ENCODE measurements at regions of chr4 and their contacts with region 1.

Region 1: GRCh38 chr4:37826295-37827029 is at the start of gene PGM2:
- DNase-seq: peak; percentile 45
- ATAC-seq: peak; percentile 98
- H3K4me3 ChIP-seq: peak within 1 kb of the TSS; percentile 79
- H3K27ac ChIP-seq: peak within 1 kb of the TSS; percentile 66
- H3K4me1 ChIP-seq: 0 out of 2 replicates have a peak, but pooled peaks cover 5% of the 10 kb centered on the region
- H3K27me3 ChIP-seq: no peaks in the 10 kb centered on the region
- CTCF ChIP-seq: 0 out of 6 replicates have a peak, but pooled peaks of 1 of the 3 experiments have one; percentile 7
- EP300 ChIP-seq: no peak
- POLR2A ChIP-seq: peak; percentile 100
- RAD21 ChIP-seq: 0 out of 2 replicates have a peak, but pooled peaks have one; percentile 5
- polyA plus RNA-seq, gene PGM2: 11.9 to 15.1 TPM

Region 2: DNA sequence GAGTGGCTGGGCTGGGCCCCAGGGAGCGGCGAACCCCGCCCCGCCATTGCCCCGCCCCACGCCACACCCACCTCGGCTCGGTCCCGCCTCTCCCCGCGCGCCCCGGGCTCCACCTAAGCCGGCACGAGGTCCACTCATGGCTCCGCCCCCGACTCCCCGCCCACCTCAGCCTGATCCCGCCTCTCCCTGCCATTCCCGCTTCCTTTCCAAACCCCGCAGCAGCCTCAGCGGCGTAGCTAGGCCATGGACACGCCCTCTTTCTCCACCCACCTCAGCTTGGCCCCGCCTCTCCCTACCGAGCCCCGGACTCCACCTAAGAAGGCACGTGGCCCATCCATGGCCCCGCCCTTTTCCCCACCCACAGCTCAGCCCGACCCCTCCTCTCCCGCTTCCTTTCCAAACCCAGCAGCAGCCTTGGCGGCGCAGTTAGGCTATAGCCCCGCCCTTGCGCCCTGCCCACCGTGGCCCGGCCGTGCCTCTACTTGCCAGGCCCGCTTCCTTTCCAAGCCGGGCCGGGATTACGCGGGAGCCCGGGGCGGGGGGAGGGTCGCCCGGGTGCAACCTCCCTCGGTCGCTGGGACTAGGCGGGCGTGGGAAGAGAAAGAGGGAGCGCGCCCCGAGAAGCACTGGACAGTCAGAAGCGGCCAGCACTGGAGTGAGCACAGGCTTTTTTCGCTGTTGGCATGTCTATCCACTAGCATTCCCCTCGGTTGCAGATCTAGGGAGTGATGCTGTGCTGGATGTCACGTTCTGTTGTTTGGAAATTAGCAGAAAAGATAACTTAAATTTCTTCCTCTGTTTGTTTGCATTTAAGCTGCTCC is 139.9 kb before region 1 on chr4 and contains the start of gene RELL1:
- CTCF ChIA-PET with region 1: interaction called, 4 read pairs
- POLR2A ChIA-PET with region 1: no interaction called
- RAD21 ChIA-PET with region 1: no interaction called
- SMC1A ChIA-PET with region 1: no interaction called
- in situ Hi-C with region 1: no loop called
- intact Hi-C with region 1: loop called (anchors 2 kb)
- DNase-seq: peak; percentile 97
- ATAC-seq: peak; percentile 89
- H3K4me3 ChIP-seq: peak within 1 kb of the TSS; percentile 87
- H3K27ac ChIP-seq: peak within 1 kb of the TSS; percentile 67
- H3K4me1 ChIP-seq: peaks cover 11% of the 10 kb centered on the region
- H3K27me3 ChIP-seq: no peaks in the 10 kb centered on the region
- CTCF ChIP-seq: no peak
- EP300 ChIP-seq: no peak
- POLR2A ChIP-seq: no peak
- RAD21 ChIP-seq: no peak
- polyA plus RNA-seq, gene RELL1: 0.20 to 0.26 TPM

Region 3: DNA sequence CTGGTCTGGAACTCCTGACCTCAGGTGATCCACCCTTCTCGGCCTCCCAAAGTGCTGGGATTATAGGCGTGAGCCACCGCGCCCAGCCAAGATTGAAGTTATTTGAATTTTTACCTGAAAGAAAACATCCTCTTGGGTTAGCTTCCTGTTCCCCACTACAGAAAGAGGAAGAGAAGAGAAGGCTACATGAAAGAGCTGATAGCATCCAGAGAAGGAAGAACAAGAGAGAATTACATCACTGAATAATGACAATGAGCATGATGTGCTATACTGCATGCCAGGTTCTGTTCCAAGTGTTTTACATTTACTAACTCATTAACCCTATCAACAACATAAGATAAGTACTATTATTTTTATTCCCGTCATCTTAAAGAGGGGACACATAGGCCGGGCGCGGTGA is 52.9 kb after region 1 on chr4:
- CTCF ChIA-PET with region 1: no interaction called
- POLR2A ChIA-PET with region 1: no interaction called
- RAD21 ChIA-PET with region 1: no interaction called
- SMC1A ChIA-PET with region 1: no interaction called
- in situ Hi-C with region 1: no loop called
- intact Hi-C with region 1: no loop called
- DNase-seq: no peak
- ATAC-seq: no peak
- H3K4me3 ChIP-seq: no peak overlapping the region
- H3K27ac ChIP-seq: no peak overlapping the region
- H3K4me1 ChIP-seq: no peaks in the 10 kb centered on the region
- H3K27me3 ChIP-seq: no peaks in the 10 kb centered on the region
- CTCF ChIP-seq: no peak
- EP300 ChIP-seq: no peak
- POLR2A ChIP-seq: no peak
- RAD21 ChIP-seq: no peak

Region 4: DNA sequence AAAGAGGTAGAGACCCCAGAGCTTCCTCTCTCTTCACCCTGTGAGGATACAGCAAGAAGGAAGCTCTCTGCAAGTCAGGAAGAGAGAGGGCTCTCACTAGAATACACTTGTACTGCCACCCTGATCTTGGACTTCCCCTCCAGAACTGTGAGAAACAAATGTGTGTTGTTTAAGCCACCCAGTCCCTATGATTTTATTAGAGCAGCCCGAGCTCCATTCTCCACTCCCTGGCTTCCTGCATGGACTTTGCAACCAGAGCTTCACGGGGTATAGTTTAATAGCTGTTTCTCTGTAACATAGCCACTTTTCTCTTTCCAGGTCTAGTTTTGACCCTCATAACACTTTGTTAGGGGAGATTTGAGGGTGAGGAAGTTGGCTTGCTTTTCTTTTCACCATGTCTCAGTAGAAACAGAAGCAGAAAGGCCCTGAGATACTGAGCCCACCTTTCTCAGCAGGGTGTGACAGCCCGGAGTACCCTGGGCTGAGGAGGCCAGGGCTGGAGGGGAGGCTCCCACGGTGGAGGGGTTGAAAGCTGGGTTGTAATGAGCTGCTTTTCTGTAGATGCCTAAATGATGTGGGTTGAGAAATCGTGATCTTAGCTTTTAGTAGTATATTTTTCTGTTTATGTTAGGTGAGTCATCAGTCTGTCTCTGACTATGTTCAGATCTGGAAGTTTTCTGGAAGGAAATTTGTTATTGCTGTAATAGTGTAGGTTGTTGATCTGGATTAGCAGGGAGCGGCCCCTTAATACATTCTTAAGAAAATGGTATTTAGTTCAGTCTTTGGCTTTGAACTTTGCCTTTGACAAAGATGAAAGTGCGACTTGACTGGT is 252.3 kb after region 1 on chr4:
- CTCF ChIA-PET with region 1: no interaction called
- POLR2A ChIA-PET with region 1: no interaction called
- RAD21 ChIA-PET with region 1: no interaction called
- SMC1A ChIA-PET with region 1: no interaction called
- in situ Hi-C with region 1: no loop called
- intact Hi-C with region 1: no loop called
- DNase-seq: no peak
- ATAC-seq: peak; percentile 65
- H3K4me3 ChIP-seq: peak overlapping the region; percentile 7; the same call in 1 of the 2 replicates
- H3K27ac ChIP-seq: peak overlapping the region; percentile 87
- H3K4me1 ChIP-seq: peaks cover 47% of the 10 kb centered on the region
- H3K27me3 ChIP-seq: no peaks in the 10 kb centered on the region
- CTCF ChIP-seq: no peak
- EP300 ChIP-seq: no peak
- POLR2A ChIP-seq: no peak
- RAD21 ChIP-seq: no peak

Measured in GM12878 (cell line).